Activated CD8-positive, alpha-beta T cell treated with anti-CD3 and anti-CD28 coated beads, Interleukin-2, amount 10 ng/mL, durations not matched to agents 7 days and 5 days (primary cell): ENCODE measurements at regions of chr17 and their contacts with region 1.

Region 1: GRCh38 chr17:18960803-18961511 is 9.0 kb downstream of the SLC5A10 start:
- DNase-seq: peak; percentile 85
- ATAC-seq: peak; percentile 96
- H3K4me3 Mint-ChIP-seq: no peak overlapping the region
- H3K27ac Mint-ChIP-seq: no peak overlapping the region
- H3K4me1 Mint-ChIP-seq: peaks cover 11% of the 10 kb centered on the region
- H3K27me3 Mint-ChIP-seq: no peaks in the 10 kb centered on the region

Region 2: GRCh38 chr17:18314731-18315561 is 646.0 kb before region 1 on chr17 and contains the starts of genes SMCR8 and TOP3A:
- CTCF ChIA-PET with region 1: no interaction called
- POLR2A ChIA-PET with region 1: no interaction called
- DNase-seq: peak; percentile 99
- ATAC-seq: peak; percentile 96
- H3K4me3 Mint-ChIP-seq: peak within 1 kb of the TSS; percentile 84
- H3K27ac Mint-ChIP-seq: peak within 1 kb of the TSS; percentile 98
- H3K4me1 Mint-ChIP-seq: peaks cover 72% of the 10 kb centered on the region
- H3K27me3 Mint-ChIP-seq: no peaks in the 10 kb centered on the region
- total RNA-seq, gene SMCR8: 23.7 TPM
- total RNA-seq, gene TOP3A: 75.9 to 77.3 TPM

Region 3: DNA sequence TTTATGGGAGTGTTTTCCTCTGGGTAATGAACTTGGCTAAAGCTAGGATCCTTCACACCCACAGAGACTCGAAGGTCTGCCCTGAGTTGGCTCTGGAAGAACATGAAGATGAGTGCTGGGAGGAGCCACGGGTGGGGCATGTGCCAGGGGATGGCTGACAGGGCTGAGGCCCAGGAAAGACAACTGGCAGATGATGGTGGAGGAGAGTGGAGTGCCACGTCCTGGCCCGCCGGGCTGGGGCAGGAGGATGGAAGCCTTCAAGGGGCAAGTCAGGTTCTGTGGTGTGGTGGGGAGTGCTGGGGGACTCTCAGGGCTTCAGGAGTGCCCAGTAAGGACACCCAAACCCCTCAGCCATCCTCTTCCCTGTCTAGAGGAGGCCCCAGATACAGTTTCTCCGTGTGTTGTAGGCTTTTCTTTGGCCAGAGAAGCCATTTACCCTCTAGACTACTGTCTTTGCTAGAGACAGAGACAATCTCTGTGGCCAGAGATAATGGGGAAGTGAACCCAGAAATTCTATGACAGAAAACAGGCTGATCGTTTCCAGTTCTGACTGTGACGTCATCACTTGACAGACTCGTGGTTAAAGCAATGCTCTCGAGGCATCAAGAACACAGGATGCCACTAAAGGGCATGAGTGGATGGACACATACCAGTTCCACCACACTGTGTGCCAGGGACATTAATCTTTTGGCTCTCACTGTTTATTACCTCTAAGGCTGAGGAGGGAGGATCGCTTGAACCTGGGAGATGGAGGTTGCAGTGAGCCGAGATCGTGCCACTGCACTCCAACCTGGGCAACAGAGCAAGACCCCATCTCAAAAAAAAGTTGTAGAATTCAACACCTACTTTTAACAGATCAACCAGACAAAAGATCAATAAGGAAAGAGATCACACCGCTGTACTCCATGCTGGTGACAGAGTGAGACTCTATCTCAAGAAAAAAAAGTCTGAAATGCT is 27.6 kb before region 1 on chr17:
- CTCF ChIA-PET with region 1: interaction called, 10 read pairs
- POLR2A ChIA-PET with region 1: no interaction called
- DNase-seq: no peak
- ATAC-seq: no peak
- H3K4me3 Mint-ChIP-seq: no peak overlapping the region
- H3K27ac Mint-ChIP-seq: peak overlapping the region; percentile 16
- H3K4me1 Mint-ChIP-seq: peaks cover 20% of the 10 kb centered on the region
- H3K27me3 Mint-ChIP-seq: peaks cover 8% of the 10 kb centered on the region

Region 4: GRCh38 chr17:18992454-18993130 is 31.6 kb after region 1 on chr17:
- CTCF ChIA-PET with region 1: interaction called, 17 read pairs
- POLR2A ChIA-PET with region 1: no interaction called
- DNase-seq: peak; percentile 68
- ATAC-seq: peak; percentile 75
- H3K4me3 Mint-ChIP-seq: no peak overlapping the region
- H3K27ac Mint-ChIP-seq: peak overlapping the region; percentile 28
- H3K4me1 Mint-ChIP-seq: peaks cover 23% of the 10 kb centered on the region
- H3K27me3 Mint-ChIP-seq: no peaks in the 10 kb centered on the region

Region 5: DNA sequence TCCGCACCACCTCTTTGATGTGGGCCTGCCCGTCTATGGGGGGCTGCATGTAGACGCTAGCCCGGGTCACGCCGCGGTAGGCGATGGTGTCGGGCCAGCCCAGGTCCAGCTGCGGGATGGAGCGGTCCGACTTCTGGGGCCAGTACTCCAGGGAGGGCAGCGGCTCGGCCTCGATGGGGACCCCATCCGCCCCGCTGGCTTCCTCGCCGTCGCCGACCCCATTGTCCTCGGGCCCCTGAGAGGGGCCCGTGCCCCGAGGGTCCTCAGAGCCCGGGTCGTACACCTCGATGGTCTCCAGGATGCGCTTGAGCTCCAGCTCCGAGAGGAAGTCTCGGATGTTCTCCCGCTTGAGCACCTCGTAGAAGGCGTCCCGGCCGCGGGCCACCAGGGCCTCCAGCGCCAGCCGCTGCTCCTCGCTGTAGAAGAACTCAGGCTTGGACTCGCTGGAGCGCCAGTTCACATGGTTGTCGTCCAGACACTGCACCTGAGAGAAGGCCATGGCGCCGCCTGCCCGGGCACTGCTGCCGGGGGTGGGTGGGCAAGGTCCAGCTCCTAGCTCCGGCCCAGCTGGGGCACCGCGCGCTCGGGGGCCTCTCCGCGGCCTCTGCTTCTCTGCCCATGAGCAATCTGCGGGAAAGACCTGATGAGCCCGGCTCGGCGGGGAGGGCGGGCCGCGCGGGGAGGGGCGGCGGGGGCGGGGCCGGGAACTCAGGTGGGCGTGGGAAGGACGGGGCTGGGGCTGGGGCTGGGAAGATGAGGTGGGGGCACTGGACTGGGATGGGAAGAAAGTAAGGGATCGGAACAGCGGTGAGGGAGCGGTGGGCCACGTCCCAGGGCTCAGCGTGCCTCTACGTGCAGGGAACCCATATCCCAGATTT is 42.8 kb after region 1 on chr17:
- CTCF ChIA-PET with region 1: interaction called, 12 read pairs
- POLR2A ChIA-PET with region 1: no interaction called
- DNase-seq: peak; percentile 42
- ATAC-seq: peak; percentile 31
- H3K4me3 Mint-ChIP-seq: peak overlapping the region; percentile 82
- H3K27ac Mint-ChIP-seq: peak overlapping the region; percentile 72
- H3K4me1 Mint-ChIP-seq: peaks cover 23% of the 10 kb centered on the region
- H3K27me3 Mint-ChIP-seq: peaks cover 19% of the 10 kb centered on the region